ENCODE measurements at regions of chr6 and their contacts with region 1.

Region 1: DNA sequence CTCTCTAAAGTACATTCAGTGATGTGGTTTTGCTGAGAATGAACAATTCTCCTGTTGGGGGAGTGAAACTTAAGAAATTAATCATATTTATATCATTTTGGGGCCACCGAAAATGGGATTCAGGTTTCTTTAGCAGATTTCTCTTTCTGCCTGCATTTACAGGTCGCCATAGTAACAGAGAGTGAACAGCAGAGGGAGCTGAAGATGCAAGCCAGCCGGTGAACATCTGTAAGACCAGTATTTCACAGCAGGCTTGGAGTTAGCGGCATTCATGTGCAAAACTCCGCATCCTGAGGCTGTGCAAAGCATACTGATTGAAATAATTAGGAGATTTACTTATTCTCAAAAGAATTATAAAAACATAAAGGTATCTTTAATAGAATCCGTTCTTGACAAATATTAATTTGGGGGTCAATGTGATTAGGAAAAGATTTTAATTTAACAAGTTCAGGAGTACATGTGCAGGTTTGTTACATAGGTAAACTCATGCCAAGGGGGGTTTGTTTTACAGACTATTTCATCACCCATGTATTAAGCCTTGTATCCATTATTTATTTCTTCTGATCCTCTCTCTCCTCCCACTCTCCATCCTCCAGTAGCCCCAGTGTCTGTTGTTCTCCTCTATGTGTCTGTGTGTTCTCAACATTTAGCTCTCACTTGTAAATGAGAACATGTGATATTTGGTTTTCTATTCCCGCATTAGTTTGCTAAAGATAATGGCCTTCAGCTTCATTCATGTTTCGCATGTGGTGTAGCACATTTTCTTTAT is 17.8 kb upstream of the HSF2 start:
- DNase-seq: peak; percentile 33
- H3K4me3 Mint-ChIP-seq: no peak overlapping the region
- H3K27ac Mint-ChIP-seq: no peak overlapping the region
- H3K4me1 Mint-ChIP-seq: peaks cover 2% of the 10 kb centered on the region
- H3K27me3 Mint-ChIP-seq: peaks cover 8% of the 10 kb centered on the region

Region 2: GRCh38 chr6:122428781-122429180 is 47.1 kb after region 1 on chr6:
- intact Hi-C with region 1: loop called (anchors 5 kb)
- DNase-seq: no peak
- H3K4me3 Mint-ChIP-seq: no peak overlapping the region
- H3K27ac Mint-ChIP-seq: no peak overlapping the region
- H3K4me1 Mint-ChIP-seq: peaks cover 11% of the 10 kb centered on the region
- H3K27me3 Mint-ChIP-seq: no peaks in the 10 kb centered on the region

Region 3: GRCh38 chr6:122491919-122492555 is 110.4 kb after region 1 on chr6:
- intact Hi-C with region 1: loop called (anchors 5 kb)
- DNase-seq: peak; percentile 49
- H3K4me3 Mint-ChIP-seq: no peak overlapping the region
- H3K27ac Mint-ChIP-seq: no peak overlapping the region
- H3K4me1 Mint-ChIP-seq: peaks cover 5% of the 10 kb centered on the region
- H3K27me3 Mint-ChIP-seq: peaks cover 1% of the 10 kb centered on the region

Region 4: GRCh38 chr6:122530440-122531046 is 148.9 kb after region 1 on chr6:
- intact Hi-C with region 1: loop called (anchors 1 kb)
- DNase-seq: peak; percentile 31
- H3K4me3 Mint-ChIP-seq: no peak overlapping the region
- H3K27ac Mint-ChIP-seq: no peak overlapping the region
- H3K4me1 Mint-ChIP-seq: peaks cover 3% of the 10 kb centered on the region
- H3K27me3 Mint-ChIP-seq: peaks cover 23% of the 10 kb centered on the region